Activated CD4-positive, alpha-beta T cell treated with anti-CD3 and anti-CD28 coated beads, Interleukin-2, amount 10 ng/mL, durations not matched to agents 24 days and 14 days (primary cell): ENCODE measurements at regions of chr4 and their contacts with region 1.

Region 1: DNA sequence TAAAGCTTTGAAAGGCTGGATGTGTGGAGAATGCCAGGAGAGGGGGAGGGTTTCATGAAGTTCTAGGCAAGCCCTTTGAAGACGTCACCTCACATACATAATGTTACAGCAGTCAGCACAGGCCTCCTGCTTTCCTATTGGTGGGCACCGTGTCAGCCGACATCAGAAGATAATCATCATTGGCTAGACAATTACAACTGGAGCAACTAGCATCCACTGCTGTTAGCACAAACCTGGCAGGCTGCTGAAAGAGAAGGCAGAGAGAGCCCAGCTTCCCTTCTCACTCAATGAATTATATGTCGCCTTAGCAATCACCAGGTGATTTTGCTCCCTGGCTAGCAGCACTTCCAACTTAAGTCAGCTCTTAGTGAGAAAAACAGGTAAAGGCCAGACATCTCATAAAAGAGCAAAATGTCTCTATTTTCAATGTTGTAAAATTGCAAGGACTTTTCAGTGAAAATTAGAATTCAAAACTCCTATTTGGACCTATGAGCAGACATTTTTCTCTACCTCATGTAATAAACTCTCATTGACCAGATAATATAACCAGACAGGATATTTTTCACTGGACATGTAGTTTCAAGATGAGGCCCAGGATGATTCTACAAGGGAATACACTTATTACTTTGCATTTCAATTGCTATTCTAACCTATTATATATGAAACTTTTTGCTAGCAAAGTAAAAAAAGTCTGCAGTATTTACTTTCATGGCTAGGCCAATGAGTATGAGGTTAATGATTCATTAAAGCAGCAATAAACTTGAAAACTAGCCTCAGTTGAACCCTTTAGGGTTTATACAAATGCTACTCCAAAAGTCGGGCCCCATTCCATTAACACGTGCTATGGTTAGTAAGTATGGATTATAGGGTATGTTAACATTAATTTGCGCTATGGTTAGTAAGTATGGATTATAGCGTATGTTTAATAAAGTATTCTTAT is 4.3 kb downstream of the ELOVL6 start:
- DNase-seq: peak; percentile 94
- H3K4me3 Mint-ChIP-seq: peak overlapping the region; percentile 62
- H3K27ac Mint-ChIP-seq: peak overlapping the region; percentile 87
- H3K4me1 Mint-ChIP-seq: peaks cover 34% of the 10 kb centered on the region
- H3K27me3 Mint-ChIP-seq: no peaks in the 10 kb centered on the region

Region 2: DNA sequence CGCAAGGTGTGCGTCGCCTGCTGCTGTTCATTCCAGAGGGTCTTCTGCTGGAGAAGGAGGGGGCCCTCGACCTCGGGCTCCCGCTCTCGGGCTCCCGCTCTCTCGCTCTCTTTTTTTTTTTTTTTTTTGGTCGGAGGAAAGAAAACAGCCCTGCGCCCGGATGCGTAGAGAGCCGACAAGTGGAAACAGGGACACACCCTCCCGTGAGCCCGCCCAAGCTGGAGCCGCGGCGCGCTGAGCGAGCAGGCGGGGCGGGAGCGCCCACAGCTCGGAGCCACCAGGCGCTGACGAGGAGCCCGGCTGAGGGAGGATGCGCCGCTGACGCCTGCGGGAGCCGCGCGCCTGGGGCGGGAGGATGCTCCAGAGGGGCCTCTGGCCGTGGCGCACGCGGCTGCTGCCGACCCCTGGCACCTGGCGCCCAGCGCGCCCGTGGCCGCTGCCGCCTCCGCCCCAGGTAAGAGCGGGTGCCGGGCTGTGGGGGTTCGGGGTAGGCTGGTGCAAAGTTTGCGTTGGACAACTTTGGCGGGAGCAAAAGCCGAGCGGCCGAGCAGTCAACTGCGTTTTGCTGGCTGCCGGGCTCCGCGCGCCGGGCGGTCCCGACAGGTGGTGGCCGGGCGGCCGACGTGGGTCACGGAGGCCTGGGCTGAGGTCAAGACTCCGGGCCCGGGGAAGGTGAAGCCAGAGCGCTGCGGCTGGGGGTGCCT is 634.0 kb before region 1 on chr4 and contains the start of gene MCUB:
- intact Hi-C with region 1: loop called (anchors 10 kb)
- DNase-seq: peak; percentile 98
- H3K4me3 Mint-ChIP-seq: peak within 1 kb of the TSS; percentile 95
- H3K27ac Mint-ChIP-seq: peak within 1 kb of the TSS; percentile 98
- H3K4me1 Mint-ChIP-seq: peaks cover 42% of the 10 kb centered on the region
- H3K27me3 Mint-ChIP-seq: no peaks in the 10 kb centered on the region
- total RNA-seq, gene MCUB: 43.6 and 46.4 TPM in 2 replicates

Region 3: GRCh38 chr4:109942292-109942926 is 251.7 kb before region 1 on chr4:
- intact Hi-C with region 1: no loop called
- DNase-seq: no peak
- H3K4me3 Mint-ChIP-seq: no peak overlapping the region
- H3K27ac Mint-ChIP-seq: no peak overlapping the region
- H3K4me1 Mint-ChIP-seq: no peaks in the 10 kb centered on the region
- H3K27me3 Mint-ChIP-seq: peaks cover 5% of the 10 kb centered on the region

Region 4: DNA sequence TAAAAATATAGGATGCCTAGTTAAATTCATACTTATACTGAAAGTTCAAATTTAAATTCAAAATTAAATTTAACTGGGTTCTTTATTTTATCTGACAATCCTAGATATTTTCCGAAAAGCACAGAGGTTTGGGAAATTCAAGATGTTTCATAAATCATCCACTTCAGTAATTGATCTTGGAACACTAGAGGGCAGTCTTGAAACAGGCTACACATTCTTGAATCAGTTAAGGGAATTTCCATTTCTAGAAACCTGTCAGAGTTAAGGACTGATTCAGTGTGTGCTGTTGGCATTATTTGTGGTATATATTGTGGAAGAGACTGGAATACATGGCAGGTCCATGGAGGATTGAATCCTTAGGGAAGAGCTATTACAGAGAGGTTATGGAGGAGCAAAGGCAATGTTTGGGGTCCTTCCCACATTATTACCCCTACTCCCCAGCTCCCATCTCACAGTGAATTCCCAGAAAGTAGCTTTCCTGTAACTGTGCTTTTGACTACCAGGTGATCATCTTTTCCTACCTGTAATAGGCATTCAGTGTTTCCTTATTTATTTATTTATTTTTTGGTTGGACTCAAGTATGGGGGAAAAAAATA is 188.5 kb before region 1 on chr4:
- intact Hi-C with region 1: loop called (anchors 5 kb)
- DNase-seq: peak; percentile 80
- H3K4me3 Mint-ChIP-seq: no peak overlapping the region
- H3K27ac Mint-ChIP-seq: no peak overlapping the region
- H3K4me1 Mint-ChIP-seq: peaks cover 19% of the 10 kb centered on the region
- H3K27me3 Mint-ChIP-seq: peaks cover 7% of the 10 kb centered on the region

Region 5: DNA sequence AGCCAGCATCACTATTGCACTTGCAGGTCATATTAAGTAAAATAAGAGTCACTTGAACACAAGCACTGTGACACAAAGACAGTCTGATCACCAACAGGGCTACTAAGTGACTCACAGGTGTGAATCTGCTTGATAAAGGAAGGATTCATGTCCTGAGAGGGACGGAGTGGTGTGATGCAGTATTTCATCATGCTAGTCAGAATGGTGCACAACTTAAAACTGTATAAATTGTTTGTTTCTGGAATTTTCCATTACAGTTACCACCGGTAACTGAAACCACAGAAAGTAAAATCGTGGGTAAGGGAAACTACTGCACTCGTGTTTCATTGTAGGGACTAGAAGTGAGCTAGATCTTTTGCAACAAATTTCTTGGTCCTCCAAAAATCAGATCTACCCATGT is 105.4 kb before region 1 on chr4:
- intact Hi-C with region 1: loop called (anchors 1 kb)
- DNase-seq: peak; percentile 84
- H3K4me3 Mint-ChIP-seq: peak overlapping the region; percentile 77
- H3K27ac Mint-ChIP-seq: peak overlapping the region; percentile 91
- H3K4me1 Mint-ChIP-seq: peaks cover 55% of the 10 kb centered on the region
- H3K27me3 Mint-ChIP-seq: no peaks in the 10 kb centered on the region

Region 6: DNA sequence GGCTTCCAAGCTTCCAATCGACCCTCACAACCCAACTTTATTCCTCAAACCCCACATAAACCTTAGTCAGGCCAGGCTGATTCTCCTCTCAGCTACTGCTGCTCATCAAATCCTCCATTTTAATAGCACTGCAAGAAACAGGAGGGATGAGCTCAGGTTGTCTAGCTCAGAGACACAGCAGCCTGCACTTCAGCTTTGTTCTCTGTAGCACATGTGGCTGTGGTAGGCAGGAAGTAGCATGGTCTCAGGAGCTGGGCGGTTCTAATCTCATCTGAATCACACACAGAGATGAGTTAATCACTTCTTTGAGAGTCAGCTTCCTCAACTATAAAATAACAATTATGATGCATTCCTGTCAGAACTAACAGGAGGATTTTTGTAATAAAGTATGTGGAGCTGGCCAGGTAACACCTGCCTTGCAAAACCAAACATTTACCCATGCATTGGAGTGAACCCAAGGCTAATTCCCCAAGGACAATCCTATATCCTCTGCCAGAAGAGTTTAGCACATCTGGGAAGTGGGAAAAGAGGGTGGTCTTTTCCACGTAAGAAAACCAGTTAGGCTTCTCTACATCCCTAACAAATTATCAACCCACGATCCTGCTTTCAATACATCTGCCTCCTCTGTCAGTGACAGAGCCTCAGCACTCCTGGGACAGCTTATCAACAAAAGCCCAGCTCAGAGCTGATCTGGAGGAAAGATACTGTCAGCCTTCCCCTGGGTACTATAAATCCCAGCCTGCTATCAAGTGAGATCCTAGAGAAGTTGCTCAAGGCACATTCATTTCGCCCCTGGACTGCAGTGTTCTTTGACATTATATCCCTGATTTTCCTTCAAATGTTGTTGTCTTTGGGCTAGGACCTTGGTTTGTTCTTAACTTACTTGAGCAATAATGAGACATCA is 28.5 kb before region 1 on chr4:
- intact Hi-C with region 1: loop called (anchors 1 kb)
- DNase-seq: peak; percentile 89
- H3K4me3 Mint-ChIP-seq: peak overlapping the region; percentile 62
- H3K27ac Mint-ChIP-seq: peak overlapping the region; percentile 98
- H3K4me1 Mint-ChIP-seq: peaks cover 24% of the 10 kb centered on the region
- H3K27me3 Mint-ChIP-seq: no peaks in the 10 kb centered on the region

Region 7: DNA sequence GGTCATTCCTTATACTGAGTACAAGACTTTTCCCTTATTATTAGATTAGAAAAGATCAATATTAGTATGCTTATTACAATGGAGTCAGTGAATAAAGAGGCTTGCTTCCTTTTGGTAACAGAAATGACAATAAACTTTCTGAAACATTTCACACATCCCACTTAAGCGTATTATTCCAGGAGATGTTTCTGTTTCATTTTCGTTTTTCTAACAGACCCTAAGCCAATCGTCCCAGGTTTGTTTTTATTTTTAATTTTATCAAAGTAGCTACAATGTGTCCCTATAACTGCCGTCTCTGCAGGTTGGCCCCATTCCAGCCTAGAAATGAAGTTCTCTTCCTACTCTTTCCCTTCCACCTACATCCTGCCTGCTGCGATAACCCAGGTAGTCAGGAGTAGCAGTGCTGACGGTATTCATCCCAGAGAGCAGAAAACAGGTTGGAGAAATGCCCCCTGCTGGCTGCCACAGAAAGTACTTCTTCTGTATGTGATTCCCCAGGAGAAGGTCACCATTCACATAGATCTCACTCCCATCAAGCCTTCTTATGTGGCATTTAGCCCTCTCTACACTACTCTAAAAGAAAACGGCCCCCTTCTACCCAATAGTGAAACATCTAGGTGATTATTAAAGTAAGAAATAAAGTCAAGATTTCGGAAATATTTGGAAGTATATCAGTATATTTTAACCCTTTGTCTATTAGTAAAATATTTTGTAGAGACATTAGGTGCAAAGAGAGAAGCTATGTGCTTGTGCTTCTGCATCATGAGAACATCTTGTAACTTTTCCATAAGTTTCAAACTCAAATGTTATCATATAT is 322.2 kb after region 1 on chr4:
- intact Hi-C with region 1: loop called (anchors 5 kb)
- DNase-seq: peak; percentile 90
- H3K4me3 Mint-ChIP-seq: peak overlapping the region; percentile 94
- H3K27ac Mint-ChIP-seq: peak overlapping the region; percentile 64
- H3K4me1 Mint-ChIP-seq: peaks cover 13% of the 10 kb centered on the region
- H3K27me3 Mint-ChIP-seq: peaks cover 13% of the 10 kb centered on the region